ENCODE measurements at regions of chr15 and their contacts with region 1.

Region 1: DNA sequence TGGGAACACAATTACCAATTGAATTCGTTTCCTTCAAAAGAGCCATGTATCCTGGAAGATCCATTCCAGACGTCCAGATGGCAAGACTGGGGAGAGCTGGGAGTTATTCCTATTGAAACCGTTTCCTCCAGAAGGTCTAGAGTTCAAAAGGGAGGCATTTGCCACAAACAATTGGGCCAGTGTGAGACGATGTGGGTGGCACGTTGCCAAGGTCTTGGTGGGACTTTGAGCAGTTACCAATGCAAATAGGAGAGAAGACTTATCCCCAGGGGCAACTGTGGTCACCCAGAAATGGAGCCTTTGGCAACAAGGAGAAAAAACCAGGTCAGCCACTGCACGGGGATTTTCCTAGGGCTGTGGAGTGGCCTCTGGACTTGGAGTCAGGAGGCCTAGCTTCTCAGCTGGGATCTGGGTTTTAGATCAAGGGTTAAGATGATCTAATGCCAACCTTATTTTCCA is 29.6 kb upstream of the TLE3 start:
- DNase-seq: peak; percentile 94
- H3K4me3 ChIP-seq: no peak overlapping the region
- H3K27ac ChIP-seq: peak overlapping the region; percentile 35
- H3K4me1 ChIP-seq: peaks cover 18% of the 10 kb centered on the region
- H3K27me3 ChIP-seq: peaks cover 6 to 10% of the 10 kb centered on the region in 2 experiments
- CTCF ChIP-seq: no peak
- POLR2A ChIP-seq: no peak

Region 2: DNA sequence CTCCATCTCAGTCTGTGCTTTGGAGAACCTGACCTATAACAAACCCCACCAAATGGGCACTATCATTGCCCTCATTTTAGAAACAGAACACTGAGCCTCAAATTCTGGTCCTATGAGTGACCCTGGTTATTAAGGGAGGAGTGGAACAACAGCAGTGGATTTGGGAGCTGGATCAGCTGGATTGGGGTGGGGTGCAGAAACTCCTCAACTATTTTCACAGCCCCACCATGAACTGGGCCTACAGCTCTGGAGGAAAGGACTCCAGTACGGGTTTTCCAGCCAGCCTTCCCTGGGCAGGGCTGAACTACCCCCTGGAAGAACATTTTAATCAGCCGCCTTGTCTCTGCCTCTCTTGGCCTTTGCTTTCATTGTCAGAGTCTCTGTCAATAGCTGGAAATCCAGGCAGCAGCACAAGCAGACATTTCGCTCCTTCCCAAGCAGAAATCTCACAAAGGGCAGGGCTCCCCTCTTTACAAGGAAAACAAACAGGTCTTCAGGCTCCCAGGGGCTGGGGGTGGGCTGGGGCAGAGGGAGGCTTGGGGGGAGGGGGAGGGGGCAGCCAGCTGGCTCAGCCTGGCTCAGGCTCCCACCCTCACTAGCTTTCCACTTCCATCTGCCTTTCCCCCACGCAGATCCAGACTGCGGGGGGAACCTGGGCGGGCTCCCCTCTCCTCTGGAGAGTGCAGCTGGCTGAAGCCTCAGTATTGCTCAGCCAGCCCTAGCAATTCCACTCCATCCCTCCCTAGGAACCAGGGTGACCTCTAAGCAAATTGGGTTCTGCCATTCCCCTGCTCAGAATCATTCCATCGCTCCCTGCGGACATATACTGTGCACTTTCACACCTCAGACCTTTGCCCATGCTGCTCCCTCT is 15.9 kb before region 1 on chr15:
- CTCF ChIA-PET with region 1: interaction called, 7 read pairs
- POLR2A ChIA-PET with region 1: no interaction called
- dilution Hi-C with region 1: no loop called
- intact Hi-C with region 1: loop called (anchors 2 kb)
- DNase-seq: peak; percentile 91
- H3K4me3 ChIP-seq: no peak overlapping the region
- H3K27ac ChIP-seq: no peak overlapping the region
- H3K4me1 ChIP-seq: peaks cover 13% of the 10 kb centered on the region
- H3K27me3 ChIP-seq: peaks cover 4 to 7% of the 10 kb centered on the region in 2 experiments
- CTCF ChIP-seq: no peak
- POLR2A ChIP-seq: no peak

Region 3: GRCh38 chr15:70245932-70246331 is 118.6 kb after region 1 on chr15:
- CTCF ChIA-PET with region 1: no interaction called
- POLR2A ChIA-PET with region 1: no interaction called
- dilution Hi-C with region 1: no loop called
- intact Hi-C with region 1: no loop called
- DNase-seq: no peak
- H3K4me3 ChIP-seq: no peak overlapping the region
- H3K27ac ChIP-seq: no peak overlapping the region
- H3K4me1 ChIP-seq: no peaks in the 10 kb centered on the region
- H3K27me3 ChIP-seq: no peaks in the 10 kb centered on the region
- CTCF ChIP-seq: no peak
- POLR2A ChIP-seq: no peak